ENCODE measurements at regions of chr17 and their contacts with region 1.

Region 1: DNA sequence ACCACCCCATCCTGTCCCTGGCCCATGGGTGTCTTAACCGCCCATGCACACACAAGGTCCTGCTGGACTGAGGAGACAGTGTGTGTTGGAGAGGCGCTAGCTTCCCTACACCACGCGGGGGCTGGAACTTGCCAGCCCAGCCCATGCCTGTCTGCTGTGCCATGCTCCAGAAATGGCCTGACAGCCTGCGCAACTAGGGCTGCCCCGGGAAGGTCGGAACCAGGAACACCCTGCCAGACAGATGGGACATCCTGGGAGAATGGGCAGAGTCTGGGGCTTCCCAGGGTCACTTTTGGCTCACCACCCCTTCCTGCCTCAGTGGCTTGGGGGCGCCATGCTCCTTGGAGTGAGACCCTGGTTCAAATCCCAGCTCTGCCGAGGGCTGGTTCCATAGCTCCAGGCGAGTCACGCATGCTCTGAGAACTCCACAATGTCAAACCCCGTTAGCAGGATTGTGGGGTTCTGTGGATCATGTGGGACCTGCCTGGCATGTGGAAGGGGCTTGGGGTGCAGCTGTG is 36.2 kb downstream of the SREBF1 start:
- DNase-seq: no peak
- H3K4me3 ChIP-seq: no peak overlapping the region
- H3K27ac ChIP-seq: no peak overlapping the region
- H3K4me1 ChIP-seq: peaks cover 20% of the 10 kb centered on the region
- H3K27me3 ChIP-seq: no peaks in the 10 kb centered on the region
- CTCF ChIP-seq: no peak

Region 2: DNA sequence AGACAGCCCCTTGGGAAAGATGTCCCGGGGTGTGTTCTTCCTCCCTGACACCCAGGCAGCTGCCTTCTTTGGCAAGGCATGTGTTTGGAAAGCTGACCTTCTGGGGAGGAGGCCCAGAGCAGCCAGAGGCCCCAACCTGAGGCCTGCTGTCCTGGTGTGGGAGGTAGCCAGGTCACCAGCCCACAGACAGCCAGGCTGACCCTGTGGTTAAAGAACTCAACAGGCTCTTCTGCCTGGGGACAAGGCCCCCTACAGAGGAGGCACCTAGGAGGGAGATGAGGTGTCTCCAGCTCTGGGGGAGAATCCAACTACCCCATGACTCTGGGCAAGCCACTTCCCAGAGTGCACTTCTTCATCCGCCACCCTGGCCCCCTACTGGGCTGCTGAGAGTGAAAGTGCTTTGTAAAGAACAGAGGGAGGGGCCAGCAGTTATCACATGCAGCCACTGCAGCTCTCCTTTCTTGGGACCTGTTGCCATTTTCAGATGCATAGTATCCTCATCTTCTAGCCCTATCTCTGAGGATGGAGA is 49.3 kb after region 1 on chr17:
- intact Hi-C with region 1: loop called (anchors 5 kb)
- DNase-seq: peak; percentile 42
- H3K4me3 ChIP-seq: no peak overlapping the region
- H3K27ac ChIP-seq: peak overlapping the region; percentile 82
- H3K4me1 ChIP-seq: peaks cover 62% of the 10 kb centered on the region
- H3K27me3 ChIP-seq: no peaks in the 10 kb centered on the region
- CTCF ChIP-seq: peak; percentile 53

Measured in left ventricle myocardium inferior (tissue), 1 donor.